ENCODE measurements at regions of chr2 and their contacts with region 1.

Region 1: GRCh38 chr2:152005607-152006006 is 93.2 kb downstream of the CACNB4 start:
- DNase-seq: no peak

Region 2: GRCh38 chr2:151828143-151828889 is 177.3 kb before region 1 on chr2 and contains the start of gene ARL5A:
- intact Hi-C with region 1: loop called (anchors 10 kb)
- DNase-seq: peak; percentile 84 to 98 (median 95)